Stomach (tissue), 19 donors: ENCODE measurements at regions of chr10 and their contacts with region 1.

Region 1: DNA sequence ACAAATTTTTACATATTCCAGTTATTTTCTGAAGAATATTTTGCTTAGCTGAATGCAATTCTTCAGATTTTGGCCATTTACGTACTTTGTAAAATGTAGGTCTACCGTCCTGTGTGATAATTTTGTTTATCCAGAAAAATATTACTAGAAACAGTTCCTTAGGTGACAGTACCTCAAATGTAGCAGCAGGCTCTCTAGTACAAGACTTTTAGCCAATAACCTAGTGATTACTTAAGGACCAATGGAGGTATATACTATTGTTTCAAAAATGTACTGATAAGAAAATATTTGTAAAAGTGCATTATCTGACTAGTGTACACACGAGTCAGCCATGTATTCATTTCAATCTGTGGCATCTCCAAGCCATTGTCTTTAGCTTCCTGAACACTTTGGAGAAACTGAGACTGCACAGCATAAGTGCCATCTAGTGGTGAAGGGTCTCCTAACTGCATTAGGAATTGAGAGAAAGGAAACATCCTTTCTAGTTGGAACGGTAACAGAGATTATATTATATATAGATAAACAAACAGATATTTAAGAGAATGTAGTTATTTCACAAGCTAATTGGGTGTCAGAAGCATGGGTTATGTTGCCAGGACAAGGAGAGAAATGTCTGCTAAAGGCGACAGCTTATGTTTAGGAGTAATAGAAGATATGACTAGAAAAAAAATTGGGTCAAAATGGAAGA is 23.7 kb downstream of the RTKN2 start:
- DNase-seq: peak in 1 of 2 donors; percentile 86
- H3K4me3 ChIP-seq: no peak overlapping the region
- H3K27ac ChIP-seq: no peak overlapping the region
- H3K4me1 ChIP-seq: peaks cover 0 to 31% (median 9%) of the 10 kb centered on the region in 4 donors
- H3K27me3 ChIP-seq: no peaks in the 10 kb centered on the region
- CTCF ChIP-seq: peak in 5 of 7 experiments; percentile 75 to 86 (median 82)
- EP300 ChIP-seq: no peak
- POLR2A ChIP-seq: no peak

Region 2: GRCh38 chr10:61903221-61903927 is 341.6 kb before region 1 on chr10:
- intact Hi-C with region 1: loop called (anchors 10 kb)
- DNase-seq: peak; percentile 61 to 85
- H3K4me3 ChIP-seq: peak overlapping the region; percentile 61 to 82 (median 71)
- H3K27ac ChIP-seq: peak overlapping the region; percentile 93 to 99 (median 98)
- H3K4me1 ChIP-seq: peaks cover 25 to 57% (median 40%) of the 10 kb centered on the region in 4 donors
- H3K27me3 ChIP-seq: no peaks in the 10 kb centered on the region
- CTCF ChIP-seq: peak in 3 of 7 experiments; percentile 13 to 35 (median 20)
- EP300 ChIP-seq: no peak
- POLR2A ChIP-seq: no peak

Region 3: GRCh38 chr10:62038609-62039190 is 206.2 kb before region 1 on chr10:
- intact Hi-C with region 1: loop called (anchors 5 kb)
- DNase-seq: peak; percentile 76 to 93
- H3K4me3 ChIP-seq: no peak overlapping the region
- H3K27ac ChIP-seq: peak overlapping the region in 4 of 5 donors; percentile 61 to 76 (median 74)
- H3K4me1 ChIP-seq: peaks cover 22 to 70% (median 51%) of the 10 kb centered on the region in 4 donors
- H3K27me3 ChIP-seq: no peaks in the 10 kb centered on the region
- CTCF ChIP-seq: peak in 5 of 7 experiments; percentile 73 to 84 (median 83)
- EP300 ChIP-seq: no peak
- POLR2A ChIP-seq: no peak

Region 4: DNA sequence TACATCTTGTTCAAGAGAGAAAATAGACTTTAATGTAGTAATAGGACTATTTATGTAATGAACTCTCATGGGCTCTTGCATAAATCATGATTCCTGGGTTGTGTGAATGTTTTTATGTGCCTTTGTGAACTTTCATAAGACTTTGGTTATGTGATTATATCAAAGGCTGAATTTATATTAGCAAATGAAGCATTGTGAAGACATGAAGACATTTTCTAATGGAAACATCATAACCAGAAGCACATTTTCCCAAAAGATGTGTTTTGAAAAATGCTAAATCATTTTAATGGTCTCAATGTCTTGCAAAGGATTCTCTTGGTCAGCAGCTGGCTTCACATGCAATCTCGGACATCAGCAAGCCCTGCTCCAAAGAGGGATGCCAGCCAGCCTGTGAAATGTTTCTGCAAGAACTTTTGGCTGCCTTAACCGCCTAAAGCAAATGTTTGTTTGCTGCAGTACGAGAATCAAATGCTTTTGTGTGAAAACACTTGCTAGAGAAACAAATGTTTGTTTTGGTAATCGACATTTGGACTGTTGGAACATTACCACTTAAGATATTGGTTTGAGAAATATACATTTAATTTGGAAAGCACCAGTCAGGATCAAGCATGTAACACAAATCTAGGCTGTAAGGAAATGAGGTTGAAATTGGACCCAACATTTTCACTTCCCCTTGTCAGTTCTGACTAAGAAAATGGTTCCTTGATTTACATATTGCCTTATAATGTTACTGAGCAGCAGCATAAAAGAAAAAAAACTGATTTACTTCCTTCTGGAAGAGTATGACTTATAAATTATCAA is 78.4 kb before region 1 on chr10:
- intact Hi-C with region 1: no loop called
- DNase-seq: peak; percentile 60 to 66
- H3K4me3 ChIP-seq: peak overlapping the region in 1 of 4 donors; percentile 17
- H3K27ac ChIP-seq: peak overlapping the region in 4 of 5 donors; percentile 34 to 79 (median 54)
- H3K4me1 ChIP-seq: peaks cover 4 to 15% (median 14%) of the 10 kb centered on the region in 4 donors
- H3K27me3 ChIP-seq: no peaks in the 10 kb centered on the region
- CTCF ChIP-seq: no peak
- EP300 ChIP-seq: no peak
- POLR2A ChIP-seq: no peak